ENCODE measurements at regions of chr3 and their contacts with region 1.

Region 1: GRCh38 chr3:50088725-50089608 is at the start of gene RBM5:
- DNase-seq: peak; percentile 95
- H3K4me3 Mint-ChIP-seq: peak within 1 kb of the TSS; percentile 97
- H3K27ac Mint-ChIP-seq: peak within 1 kb of the TSS; percentile 95
- H3K4me1 Mint-ChIP-seq: peaks cover 32% of the 10 kb centered on the region
- H3K27me3 Mint-ChIP-seq: no peaks in the 10 kb centered on the region
- total RNA-seq, gene RBM5: 157 to 169 TPM

Region 2: DNA sequence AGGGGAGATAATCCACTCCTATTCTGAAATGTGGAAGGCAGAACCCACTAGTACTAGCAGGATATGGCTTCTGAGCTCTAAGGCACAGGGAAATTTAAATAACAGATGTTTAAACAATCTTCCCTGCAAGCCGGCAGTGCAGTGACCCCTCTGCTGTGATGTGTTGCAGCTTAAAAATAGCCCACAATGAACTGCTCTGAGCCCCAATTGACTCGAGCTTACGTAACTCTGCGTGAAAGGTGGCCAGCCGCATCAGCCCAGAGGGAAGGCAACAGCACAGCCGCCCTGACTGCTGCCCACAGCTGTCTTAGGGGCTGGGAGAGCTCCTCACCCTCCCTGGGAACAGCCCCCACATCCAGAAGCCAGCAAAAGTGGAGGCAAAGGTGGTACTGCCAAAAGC is 206.8 kb before region 1 on chr3:
- CTCF ChIA-PET with region 1: no interaction called
- POLR2A ChIA-PET with region 1: no interaction called
- DNase-seq: no peak
- H3K4me3 Mint-ChIP-seq: no peak overlapping the region
- H3K27ac Mint-ChIP-seq: no peak overlapping the region
- H3K4me1 Mint-ChIP-seq: no peaks in the 10 kb centered on the region
- H3K27me3 Mint-ChIP-seq: no peaks in the 10 kb centered on the region

Region 3: GRCh38 chr3:49939858-49940666 is 148.9 kb before region 1 on chr3 and contains the start of gene RBM6:
- CTCF ChIA-PET with region 1: interaction called, 4 read pairs
- POLR2A ChIA-PET with region 1: interaction called, 19 read pairs
- DNase-seq: peak; percentile 97
- H3K4me3 Mint-ChIP-seq: peak within 1 kb of the TSS; percentile 97
- H3K27ac Mint-ChIP-seq: peak within 1 kb of the TSS; percentile 97
- H3K4me1 Mint-ChIP-seq: peaks cover 31% of the 10 kb centered on the region
- H3K27me3 Mint-ChIP-seq: no peaks in the 10 kb centered on the region
- total RNA-seq, gene RBM6: 88.0 to 90.3 TPM

Region 4: DNA sequence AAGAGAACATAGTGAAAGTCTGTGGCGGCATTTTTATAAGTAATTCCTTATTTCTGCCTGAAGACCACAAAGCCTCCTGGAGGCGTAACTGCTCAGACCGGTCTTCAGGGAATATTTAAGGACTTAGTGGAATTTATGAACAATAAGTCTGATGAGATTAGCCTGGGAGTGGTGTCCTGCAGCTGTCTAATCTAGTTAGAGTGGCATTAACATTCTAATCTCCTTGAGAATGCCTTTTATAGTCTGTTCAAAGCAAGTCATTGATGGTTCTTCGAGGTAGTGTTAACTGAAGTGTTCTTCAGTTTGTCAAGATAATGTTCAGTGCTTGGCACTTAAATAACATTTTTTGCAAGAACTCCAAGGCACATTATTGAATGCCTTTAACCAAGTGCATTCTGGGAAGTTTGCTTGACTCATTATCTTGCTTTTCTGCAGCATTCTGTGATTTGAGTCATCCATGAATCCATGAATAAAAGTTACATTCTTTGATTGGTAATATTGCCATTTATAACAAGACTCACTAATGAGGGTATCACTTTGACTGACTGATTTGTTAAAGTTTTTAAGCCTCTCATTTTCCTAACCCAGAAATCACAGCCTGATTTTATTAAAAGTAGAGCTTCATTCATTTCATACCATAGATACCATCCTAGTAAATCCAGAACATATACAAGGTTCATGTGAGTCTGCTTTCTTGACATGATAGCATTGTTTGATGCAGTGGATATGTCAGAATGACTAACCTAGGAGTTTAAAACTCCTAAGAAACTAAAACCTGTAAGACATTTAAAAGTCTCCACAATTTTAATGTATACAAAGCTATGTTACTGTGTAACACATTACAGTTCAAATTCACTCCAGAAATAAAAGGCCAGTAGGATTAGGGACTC is 12.2 kb after region 1 on chr3:
- CTCF ChIA-PET with region 1: interaction called, 5 read pairs
- POLR2A ChIA-PET with region 1: interaction called, 20 read pairs
- DNase-seq: no peak
- H3K4me3 Mint-ChIP-seq: no peak overlapping the region
- H3K27ac Mint-ChIP-seq: no peak overlapping the region
- H3K4me1 Mint-ChIP-seq: peaks cover 9% of the 10 kb centered on the region
- H3K27me3 Mint-ChIP-seq: no peaks in the 10 kb centered on the region

Region 5: DNA sequence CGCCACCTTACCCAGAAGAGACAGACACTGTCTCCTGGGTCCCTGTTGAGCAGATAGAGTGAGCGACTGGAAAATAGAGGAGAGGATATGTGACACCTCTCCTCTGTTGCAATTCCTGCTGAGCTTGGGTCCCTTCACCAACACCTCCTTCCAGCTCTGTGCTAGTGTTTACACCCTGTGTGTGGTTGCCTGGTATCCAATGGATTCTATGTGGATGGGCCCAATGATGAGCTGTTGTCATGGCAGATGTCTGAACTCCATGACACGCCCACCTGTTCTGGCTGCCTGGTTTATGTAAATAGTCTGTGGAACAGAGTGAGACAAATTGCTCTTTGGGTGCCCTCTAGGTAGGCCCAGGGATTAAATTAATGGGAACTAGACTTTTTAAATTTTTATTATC is 23.5 kb after region 1 on chr3:
- CTCF ChIA-PET with region 1: no interaction called
- POLR2A ChIA-PET with region 1: interaction called, 10 read pairs
- DNase-seq: no peak
- H3K4me3 Mint-ChIP-seq: no peak overlapping the region
- H3K27ac Mint-ChIP-seq: no peak overlapping the region
- H3K4me1 Mint-ChIP-seq: peaks cover 3% of the 10 kb centered on the region
- H3K27me3 Mint-ChIP-seq: no peaks in the 10 kb centered on the region